ENCODE measurements at regions of chr5 and their contacts with region 1.

Region 1: GRCh38 chr5:171031977-171032376 is 170.2 kb downstream of the RANBP17 start:
- DNase-seq: no peak
- H3K4me3 Mint-ChIP-seq: no peak overlapping the region
- H3K27ac Mint-ChIP-seq: no peak overlapping the region
- H3K4me1 Mint-ChIP-seq: no peaks in the 10 kb centered on the region
- H3K27me3 Mint-ChIP-seq: no peaks in the 10 kb centered on the region

Region 2: GRCh38 chr5:170504031-170504596 is 527.9 kb before region 1 on chr5:
- CTCF ChIA-PET with region 1: no interaction called
- POLR2A ChIA-PET with region 1: no interaction called
- intact Hi-C with region 1: loop called (anchors 5 kb)
- DNase-seq: no peak
- H3K4me3 Mint-ChIP-seq: no peak overlapping the region
- H3K27ac Mint-ChIP-seq: no peak overlapping the region
- H3K4me1 Mint-ChIP-seq: no peaks in the 10 kb centered on the region
- H3K27me3 Mint-ChIP-seq: peaks cover 42% of the 10 kb centered on the region

Region 3: GRCh38 chr5:171080186-171080938 is 48.4 kb after region 1 on chr5:
- CTCF ChIA-PET with region 1: no interaction called
- POLR2A ChIA-PET with region 1: no interaction called
- intact Hi-C with region 1: no loop called
- DNase-seq: no peak
- H3K4me3 Mint-ChIP-seq: no peak overlapping the region
- H3K27ac Mint-ChIP-seq: no peak overlapping the region
- H3K4me1 Mint-ChIP-seq: no peaks in the 10 kb centered on the region
- H3K27me3 Mint-ChIP-seq: no peaks in the 10 kb centered on the region

Measured in activated CD4-positive, alpha-beta memory T cell treated with anti-CD3 and anti-CD28 coated beads for 36 hours (primary cell).